ENCODE measurements at regions of chr2 and their contacts with region 1.

Region 1: GRCh38 chr2:222057347-222058073 is 241.3 kb downstream of the PAX3 start:
- DNase-seq: peak; percentile 8
- H3K4me3 ChIP-seq: no peak overlapping the region
- H3K27ac ChIP-seq: no peak overlapping the region
- H3K4me1 ChIP-seq: no peaks in the 10 kb centered on the region
- H3K27me3 ChIP-seq: peaks cover 3 to 10% of the 10 kb centered on the region in 2 experiments
- CTCF ChIP-seq: peak; percentile 23 to 40
- POLR2A ChIP-seq: no peak

Region 2: DNA sequence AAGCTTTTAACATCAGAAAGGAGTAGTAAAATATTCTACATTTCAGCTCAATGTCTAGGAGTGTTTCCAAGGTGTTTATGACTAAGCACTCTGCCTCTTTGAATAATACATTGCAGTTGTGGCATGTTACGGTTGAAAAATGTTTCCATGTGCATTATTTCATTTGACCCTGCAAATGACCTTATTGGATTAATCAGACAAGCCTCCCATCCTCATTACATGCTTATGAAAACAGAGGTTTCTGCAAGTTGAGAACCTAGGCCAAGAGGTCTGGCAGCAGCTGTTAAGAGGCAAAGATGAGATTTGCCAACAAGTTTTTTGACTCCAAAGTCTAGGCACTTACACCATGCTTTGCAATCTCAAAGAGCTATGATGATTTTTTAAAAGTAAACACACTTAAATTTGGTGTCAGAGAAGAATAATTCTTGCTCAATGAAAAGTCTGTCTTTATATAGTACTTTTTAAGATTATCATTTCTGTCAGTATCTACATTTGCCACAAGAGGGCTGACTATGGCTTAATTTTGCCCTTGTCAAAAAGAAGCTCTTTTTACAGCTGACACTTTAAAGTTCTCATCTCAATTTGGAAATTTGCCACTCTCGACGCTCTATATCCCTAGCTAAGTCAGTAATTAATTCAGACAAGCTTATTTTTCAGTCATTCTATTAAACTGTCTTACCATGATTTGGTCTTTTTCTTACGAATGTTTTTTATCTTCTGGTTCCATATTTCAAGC is 19.3 kb before region 1 on chr2:
- CTCF ChIA-PET with region 1: interaction called, 11 read pairs
- POLR2A ChIA-PET with region 1: no interaction called
- dilution Hi-C with region 1: no loop called
- intact Hi-C with region 1: no loop called
- DNase-seq: no peak
- H3K4me3 ChIP-seq: no peak overlapping the region
- H3K27ac ChIP-seq: no peak overlapping the region
- H3K4me1 ChIP-seq: no peaks in the 10 kb centered on the region
- H3K27me3 ChIP-seq: no peaks in the 10 kb centered on the region
- CTCF ChIP-seq: peak in 1 of 2 donors; percentile 10
- POLR2A ChIP-seq: no peak

Region 3: GRCh38 chr2:222483513-222484039 is 426.1 kb after region 1 on chr2:
- CTCF ChIA-PET with region 1: no interaction called
- POLR2A ChIA-PET with region 1: no interaction called
- dilution Hi-C with region 1: no loop called
- intact Hi-C with region 1: loop called (anchors 1 kb)
- DNase-seq: no peak
- H3K4me3 ChIP-seq: no peak overlapping the region
- H3K27ac ChIP-seq: no peak overlapping the region
- H3K4me1 ChIP-seq: no peaks in the 10 kb centered on the region
- H3K27me3 ChIP-seq: peaks cover 2% of the 10 kb centered on the region in 2 experiments
- CTCF ChIP-seq: no peak
- POLR2A ChIP-seq: no peak

Region 4: DNA sequence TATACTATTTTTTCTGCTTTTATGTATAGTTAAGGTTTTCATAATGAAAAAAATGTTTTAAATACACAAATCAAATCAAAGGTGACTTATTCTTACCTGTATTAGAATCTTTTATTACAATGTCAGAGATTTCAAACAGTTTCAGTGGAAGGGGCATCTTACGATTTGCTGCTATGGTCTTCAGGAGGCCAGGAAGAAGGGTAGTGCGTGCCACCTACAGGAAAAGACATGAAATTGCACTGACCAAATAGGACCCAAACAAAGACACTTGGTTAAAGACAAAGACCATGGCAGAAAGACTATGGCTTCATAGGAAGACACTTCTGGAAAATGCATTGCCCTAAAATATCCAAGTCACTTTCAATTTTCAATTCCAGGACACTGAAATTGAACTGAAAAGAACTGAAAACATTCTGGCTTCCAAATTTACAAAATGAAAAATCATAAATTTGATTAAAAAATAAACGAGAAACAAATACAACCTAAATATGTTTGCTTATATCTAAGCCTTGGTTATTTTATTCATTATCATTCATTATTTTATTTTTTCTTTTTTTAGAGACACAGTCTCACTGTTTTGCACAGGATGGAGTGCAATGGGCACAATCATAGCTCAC is 556.3 kb after region 1 on chr2:
- CTCF ChIA-PET with region 1: interaction called, 7 read pairs
- POLR2A ChIA-PET with region 1: no interaction called
- dilution Hi-C with region 1: no loop called
- intact Hi-C with region 1: loop called (anchors 1 kb)
- DNase-seq: peak; percentile 57
- H3K4me3 ChIP-seq: no peak overlapping the region
- H3K27ac ChIP-seq: no peak overlapping the region
- H3K4me1 ChIP-seq: no peaks in the 10 kb centered on the region
- H3K27me3 ChIP-seq: no peaks in the 10 kb centered on the region
- CTCF ChIP-seq: peak; percentile 63 to 69
- POLR2A ChIP-seq: no peak

Measured in endothelial cell of umbilical vein (primary cell).